ENCODE measurements at regions of chr18 and their contacts with region 1.

Region 1: DNA sequence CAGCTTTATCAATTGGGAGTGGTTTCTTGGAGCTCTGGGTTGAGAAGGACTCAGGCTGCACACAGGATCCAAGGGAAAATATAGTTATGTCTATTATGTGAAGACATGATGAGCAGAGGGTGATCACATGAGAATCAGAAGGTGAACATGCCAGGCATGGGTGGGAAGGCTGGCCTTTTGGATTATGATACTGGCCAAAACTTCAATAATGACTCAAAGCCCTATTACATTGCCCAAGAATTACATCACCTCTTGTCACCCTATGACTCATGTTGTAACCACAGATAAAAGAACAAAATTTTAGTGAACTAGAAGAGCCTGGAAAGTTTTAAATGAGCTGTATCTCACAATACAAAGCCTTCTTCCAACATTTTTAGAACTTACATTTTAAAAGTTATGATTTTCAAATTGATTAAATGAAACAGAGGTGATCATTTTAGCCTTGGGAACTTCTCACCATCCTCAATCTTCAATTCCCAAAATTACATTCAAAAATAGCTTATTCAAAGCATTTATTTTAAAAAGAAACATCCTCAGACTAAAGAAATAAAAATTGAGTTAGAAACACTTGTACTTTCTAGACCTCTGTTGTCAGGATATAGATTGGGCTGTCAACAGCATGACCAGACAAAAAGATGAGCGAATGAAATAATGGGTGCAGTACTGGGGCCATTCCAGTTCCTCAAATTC is 428.3 kb downstream of the MBD2 start:
- DNase-seq: no peak
- H3K4me3 ChIP-seq: no peak overlapping the region
- H3K27ac ChIP-seq: no peak overlapping the region
- H3K4me1 ChIP-seq: no peaks in the 10 kb centered on the region
- H3K27me3 ChIP-seq: no peaks in the 10 kb centered on the region
- CTCF ChIP-seq: no peak
- EP300 ChIP-seq: no peak
- POLR2A ChIP-seq: no peak

Region 2: GRCh38 chr18:53850918-53851317 is 54.7 kb after region 1 on chr18:
- intact Hi-C with region 1: loop called (anchors 10 kb)
- DNase-seq: no peak
- H3K4me3 ChIP-seq: no peak overlapping the region
- H3K27ac ChIP-seq: no peak overlapping the region
- H3K4me1 ChIP-seq: no peaks in the 10 kb centered on the region
- H3K27me3 ChIP-seq: no peaks in the 10 kb centered on the region
- CTCF ChIP-seq: no peak
- EP300 ChIP-seq: no peak
- POLR2A ChIP-seq: no peak